Mammary epithelial cell (primary cell): ENCODE measurements at regions of chr12 and their contacts with region 1.

Region 1: DNA sequence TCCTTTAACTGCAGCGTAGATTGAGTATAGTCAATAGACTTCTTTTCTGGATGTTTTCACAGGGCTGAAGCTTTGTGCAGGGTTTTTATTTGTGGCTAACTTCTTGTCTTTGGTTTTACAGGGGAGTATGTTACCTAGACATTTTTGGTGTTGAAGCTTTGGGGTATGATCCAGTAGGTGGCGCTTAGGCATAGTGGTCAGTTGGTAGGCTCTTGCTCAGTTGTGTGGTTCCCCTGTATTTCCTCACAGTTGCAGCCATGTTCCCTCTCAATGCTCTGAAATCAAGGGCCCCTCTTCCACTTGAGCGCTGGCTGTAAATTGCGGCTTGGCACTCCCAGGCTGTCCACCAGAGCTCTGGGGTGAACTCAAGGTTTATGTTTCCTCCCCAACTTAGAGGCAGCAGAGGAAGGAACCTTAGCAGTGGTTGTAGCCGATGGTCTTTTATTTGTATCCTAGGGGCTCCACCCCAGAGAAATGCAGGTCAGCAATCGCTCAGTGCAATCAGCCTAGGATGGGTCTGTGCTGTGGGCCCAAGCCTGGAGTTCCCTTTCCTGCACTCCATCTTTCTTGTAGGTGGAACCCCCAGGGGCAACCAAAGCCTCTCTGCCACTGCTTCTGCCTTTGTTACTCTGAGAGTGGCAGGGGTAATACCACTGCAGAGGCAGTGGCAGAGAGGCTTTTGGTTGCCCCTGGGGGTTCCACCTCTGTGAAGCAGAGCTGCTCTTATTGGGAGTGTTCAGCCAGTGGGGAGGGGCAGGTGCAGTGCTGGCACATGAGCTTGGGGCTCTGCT is 55.1 kb downstream of the CMAS start:
- DNase-seq: peak; percentile 73
- H3K4me3 ChIP-seq: no peak overlapping the region
- H3K27ac ChIP-seq: peak overlapping the region; percentile 46
- H3K4me1 ChIP-seq: peaks cover 16% of the 10 kb centered on the region
- H3K27me3 ChIP-seq: no peaks in the 10 kb centered on the region
- CTCF ChIP-seq: peak; percentile 53 to 77

Region 2: GRCh38 chr12:21962236-21962635 is 138.9 kb before region 1 on chr12:
- CTCF ChIA-PET with region 1: no interaction called
- dilution Hi-C with region 1: no loop called
- in situ Hi-C with region 1: no loop called
- intact Hi-C with region 1: no loop called
- DNase-seq: peak; percentile 65
- H3K4me3 ChIP-seq: no peak overlapping the region
- H3K27ac ChIP-seq: no peak overlapping the region
- H3K4me1 ChIP-seq: no peaks in the 10 kb centered on the region
- H3K27me3 ChIP-seq: no peaks in the 10 kb centered on the region
- CTCF ChIP-seq: no peak

Region 3: DNA sequence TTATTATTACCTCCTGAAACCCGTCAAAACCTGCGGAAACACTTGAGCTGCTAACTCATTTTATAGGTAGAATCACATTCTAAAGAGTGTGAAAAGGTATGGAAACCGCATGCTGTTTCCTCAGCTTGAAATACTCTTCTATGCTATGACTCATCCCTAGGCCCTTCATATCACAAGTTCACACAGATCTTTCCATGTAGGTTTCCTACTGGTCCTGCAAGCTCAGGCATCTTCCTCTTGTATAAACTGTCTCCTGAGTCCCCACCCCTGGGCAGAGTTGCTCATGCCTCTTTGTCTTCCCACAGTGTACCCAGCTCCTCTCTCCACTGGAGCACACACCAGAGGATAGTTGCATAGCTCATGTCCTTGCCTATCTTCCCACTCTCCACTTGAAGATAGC is 29.5 kb after region 1 on chr12:
- CTCF ChIA-PET with region 1: no interaction called
- dilution Hi-C with region 1: no loop called
- in situ Hi-C with region 1: no loop called
- intact Hi-C with region 1: loop called (anchors 2 kb)
- DNase-seq: peak; percentile 98
- H3K4me3 ChIP-seq: no peak overlapping the region
- H3K27ac ChIP-seq: peak overlapping the region; percentile 58
- H3K4me1 ChIP-seq: peaks cover 20% of the 10 kb centered on the region
- H3K27me3 ChIP-seq: no peaks in the 10 kb centered on the region
- CTCF ChIP-seq: no peak

Region 4: DNA sequence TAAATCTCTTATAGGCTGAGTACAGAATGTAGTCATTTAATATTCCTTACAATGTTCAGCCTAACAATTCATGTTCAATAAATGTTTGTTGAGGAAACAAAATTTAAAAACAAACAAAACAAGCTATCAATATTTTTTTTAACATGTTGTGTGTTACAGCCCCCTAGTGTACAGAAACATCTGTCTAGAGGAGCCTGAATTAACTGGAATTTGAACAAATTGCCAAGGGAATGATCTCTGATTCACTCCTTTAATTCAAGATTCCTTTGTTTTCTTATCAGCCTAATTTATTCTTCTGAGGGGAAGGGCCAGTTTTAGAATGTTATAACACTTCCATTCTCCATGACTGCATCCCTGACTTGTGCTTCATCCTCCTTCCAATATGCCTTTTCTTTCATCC is 72.0 kb after region 1 on chr12:
- CTCF ChIA-PET with region 1: interaction called, 8 read pairs
- dilution Hi-C with region 1: no loop called
- in situ Hi-C with region 1: loop called (anchors 5 to 10 kb)
- intact Hi-C with region 1: loop called (anchors 1 kb)
- DNase-seq: no peak
- H3K4me3 ChIP-seq: no peak overlapping the region
- H3K27ac ChIP-seq: no peak overlapping the region
- H3K4me1 ChIP-seq: no peaks in the 10 kb centered on the region
- H3K27me3 ChIP-seq: no peaks in the 10 kb centered on the region
- CTCF ChIP-seq: peak; percentile 32 to 50

Region 5: DNA sequence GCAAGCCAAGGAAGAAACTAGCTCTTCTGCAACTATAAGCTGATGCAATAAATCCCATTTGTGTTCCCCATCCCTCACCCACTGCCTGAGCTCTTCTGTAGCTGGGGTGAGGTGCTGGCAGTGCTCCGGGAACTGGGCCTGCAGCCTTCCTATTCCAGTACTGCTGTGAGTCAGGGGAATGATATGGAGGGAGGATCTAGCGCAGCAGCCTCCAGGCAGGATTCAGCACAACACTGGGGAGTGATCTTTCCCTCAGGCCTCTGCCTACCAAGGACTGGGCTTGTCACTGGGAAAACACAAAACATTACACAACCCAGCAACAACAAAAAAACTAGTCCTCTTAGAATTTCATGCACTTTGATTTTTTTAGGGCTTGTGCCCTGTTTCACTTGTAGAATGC is 174.7 kb after region 1 on chr12:
- CTCF ChIA-PET with region 1: no interaction called
- dilution Hi-C with region 1: no loop called
- in situ Hi-C with region 1: no loop called
- intact Hi-C with region 1: loop called (anchors 1 kb)
- DNase-seq: peak; percentile 97
- H3K4me3 ChIP-seq: no peak overlapping the region
- H3K27ac ChIP-seq: peak overlapping the region; percentile 95
- H3K4me1 ChIP-seq: peaks cover 27% of the 10 kb centered on the region
- H3K27me3 ChIP-seq: no peaks in the 10 kb centered on the region
- CTCF ChIP-seq: no peak

Region 6: DNA sequence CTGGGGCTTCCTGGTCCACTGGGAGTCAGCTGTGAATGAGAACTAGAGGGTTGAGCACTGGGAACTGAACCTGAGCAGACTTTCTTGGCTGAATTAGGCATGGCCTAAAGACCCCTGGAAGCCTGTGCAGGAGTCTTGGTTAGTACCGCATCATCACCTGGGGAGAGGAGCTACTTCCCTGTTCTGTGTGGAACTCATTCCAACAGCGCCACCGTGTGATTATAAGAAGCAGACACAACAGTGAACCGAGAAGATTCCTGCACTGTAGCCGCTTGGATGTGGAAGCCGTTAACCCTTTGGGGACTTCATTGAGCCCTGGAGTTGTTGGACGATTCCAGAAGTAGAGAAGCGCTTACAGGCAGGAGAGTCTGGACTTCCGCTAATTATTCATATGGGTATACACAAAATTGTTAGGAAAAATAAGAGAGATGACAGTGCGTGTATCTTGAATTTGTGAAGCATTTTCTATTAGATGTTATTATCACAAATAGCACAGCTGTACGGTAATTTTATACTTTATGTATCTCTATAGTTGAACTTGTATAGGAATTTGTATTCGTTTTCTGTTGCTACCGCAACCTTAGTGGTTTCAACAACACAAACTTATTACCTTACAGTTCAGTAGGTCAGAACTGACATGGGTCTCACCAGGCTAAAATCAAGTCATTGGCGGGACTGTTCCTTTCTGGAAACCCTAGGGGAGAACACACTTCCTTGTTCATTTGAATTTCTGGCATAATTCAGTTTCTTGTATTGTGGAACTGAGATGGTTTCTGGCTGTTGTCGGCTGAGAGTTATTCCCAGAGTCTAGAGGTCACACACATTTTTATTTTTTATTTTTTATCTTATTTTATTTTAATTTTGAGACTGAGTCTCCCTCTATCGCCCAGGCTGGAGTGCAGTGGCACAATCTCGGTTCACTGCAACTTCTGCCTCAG is 342.5 kb after region 1 on chr12:
- CTCF ChIA-PET with region 1: interaction called, 4 read pairs
- dilution Hi-C with region 1: no loop called
- in situ Hi-C with region 1: no loop called
- intact Hi-C with region 1: loop called (anchors 1 kb)
- DNase-seq: peak; percentile 71
- H3K4me3 ChIP-seq: no peak overlapping the region
- H3K27ac ChIP-seq: no peak overlapping the region
- H3K4me1 ChIP-seq: no peaks in the 10 kb centered on the region
- H3K27me3 ChIP-seq: no peaks in the 10 kb centered on the region
- CTCF ChIP-seq: peak; percentile 81 to 84